B cell (primary cell): ENCODE measurements at regions of chr5 and their contacts with region 1.

Region 1: DNA sequence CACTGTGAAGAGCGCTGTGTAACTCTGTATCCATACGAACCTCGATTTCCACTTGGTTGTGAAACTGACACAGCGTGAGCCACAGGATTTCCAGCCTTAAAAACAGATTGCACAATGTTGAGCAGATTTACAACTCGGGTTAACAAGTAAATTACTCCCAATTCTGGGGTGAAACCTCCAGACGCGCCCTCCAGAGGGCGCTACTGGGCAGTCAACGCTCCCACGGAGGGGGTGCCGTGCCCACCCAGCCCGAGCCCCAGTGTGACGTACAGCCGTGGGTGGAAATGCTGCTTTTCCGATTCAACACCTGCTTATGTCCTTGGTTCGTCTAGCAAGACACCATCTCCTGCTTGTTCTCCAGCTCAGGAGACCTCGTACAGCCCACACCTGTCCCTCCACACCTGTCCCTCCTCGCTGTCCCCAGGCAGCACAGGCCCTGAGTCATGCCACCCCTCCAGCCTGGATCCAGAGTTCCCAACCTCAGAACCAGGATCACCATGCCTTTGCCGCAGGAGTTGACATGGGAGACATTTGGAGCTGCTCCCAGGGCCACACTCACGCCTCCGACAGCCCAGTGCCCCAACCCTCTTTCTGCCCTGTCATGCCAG is 34.4 kb upstream of the SLC6A3 start:
- DNase-seq: peak; percentile 89
- ATAC-seq: peak; percentile 64
- H3K4me3 ChIP-seq: no peak overlapping the region
- H3K4me3 Mint-ChIP-seq: peak overlapping the region; percentile 76
- H3K27ac ChIP-seq: peak overlapping the region; percentile 66 to 84
- H3K27ac Mint-ChIP-seq: peak overlapping the region; percentile 94
- H3K4me1 ChIP-seq: peaks cover 48 to 55% of the 10 kb centered on the region in 2 donors
- H3K4me1 Mint-ChIP-seq: peaks cover 52% of the 10 kb centered on the region
- H3K27me3 ChIP-seq: no peaks in the 10 kb centered on the region
- H3K27me3 Mint-ChIP-seq: no peaks in the 10 kb centered on the region
- CTCF ChIP-seq: peak; percentile 88

Region 2: GRCh38 chr5:1004461-1005248 is 475.0 kb before region 1 on chr5:
- CTCF ChIA-PET with region 1: no interaction called
- POLR2A ChIA-PET with region 1: no interaction called
- intact Hi-C with region 1: no loop called
- DNase-seq: peak; percentile 61
- ATAC-seq: peak; percentile 44
- H3K4me3 ChIP-seq: peak overlapping the region in 3 of 5 experiments; percentile 47 to 60 (median 51)
- H3K4me3 Mint-ChIP-seq: peak overlapping the region; percentile 74
- H3K27ac ChIP-seq: no peak overlapping the region
- H3K27ac Mint-ChIP-seq: no peak overlapping the region
- H3K4me1 ChIP-seq: peaks cover 20 to 25% of the 10 kb centered on the region in 2 donors
- H3K4me1 Mint-ChIP-seq: peaks cover 24% of the 10 kb centered on the region
- H3K27me3 ChIP-seq: peaks cover 0 to 54% (median 14%) of the 10 kb centered on the region in 4 experiments
- H3K27me3 Mint-ChIP-seq: peaks cover 39% of the 10 kb centered on the region
- CTCF ChIP-seq: peak; percentile 37

Region 3: GRCh38 chr5:1344975-1345838 is 134.5 kb before region 1 on chr5 and contains the start of gene CLPTM1L:
- CTCF ChIA-PET with region 1: no interaction called
- POLR2A ChIA-PET with region 1: interaction called, 3 read pairs
- intact Hi-C with region 1: loop called (anchors 10 kb)
- DNase-seq: peak; percentile 94
- ATAC-seq: peak; percentile 95
- H3K4me3 ChIP-seq: peak within 1 kb of the TSS; percentile 56 to 92 (median 81)
- H3K4me3 Mint-ChIP-seq: peak within 1 kb of the TSS; percentile 91
- H3K27ac ChIP-seq: peak within 1 kb of the TSS; percentile 73 to 78
- H3K27ac Mint-ChIP-seq: peak within 1 kb of the TSS; percentile 91
- H3K4me1 ChIP-seq: peaks cover 19 to 36% of the 10 kb centered on the region in 2 donors
- H3K4me1 Mint-ChIP-seq: peaks cover 29% of the 10 kb centered on the region
- H3K27me3 ChIP-seq: no peaks in the 10 kb centered on the region
- H3K27me3 Mint-ChIP-seq: no peaks in the 10 kb centered on the region
- CTCF ChIP-seq: no peak
- total RNA-seq, gene CLPTM1L: 99.9 and 104 TPM in 2 replicates

Region 4: GRCh38 chr5:1503241-1504068 is 23.8 kb after region 1 on chr5:
- CTCF ChIA-PET with region 1: interaction called, 81 read pairs
- POLR2A ChIA-PET with region 1: interaction called, 36 read pairs
- intact Hi-C with region 1: loop called (anchors 1 kb)
- DNase-seq: peak; percentile 81
- ATAC-seq: peak; percentile 34
- H3K4me3 ChIP-seq: peak overlapping the region in 4 of 5 experiments; percentile 5 to 54 (median 40)
- H3K4me3 Mint-ChIP-seq: peak overlapping the region; percentile 83
- H3K27ac ChIP-seq: peak overlapping the region; percentile 91 to 96
- H3K27ac Mint-ChIP-seq: peak overlapping the region; percentile 95
- H3K4me1 ChIP-seq: peaks cover 80 to 89% of the 10 kb centered on the region in 2 donors
- H3K4me1 Mint-ChIP-seq: peaks cover 83% of the 10 kb centered on the region
- H3K27me3 ChIP-seq: no peaks in the 10 kb centered on the region
- H3K27me3 Mint-ChIP-seq: no peaks in the 10 kb centered on the region
- CTCF ChIP-seq: no peak

Region 5: GRCh38 chr5:1523771-1524480 is 44.2 kb after region 1 on chr5 and contains the start of gene LPCAT1:
- CTCF ChIA-PET with region 1: interaction called, 4 read pairs
- POLR2A ChIA-PET with region 1: interaction called, 12 read pairs
- intact Hi-C with region 1: no loop called
- DNase-seq: peak; percentile 88
- ATAC-seq: peak; percentile 85
- H3K4me3 ChIP-seq: peak within 1 kb of the TSS; percentile 32 to 74 (median 64)
- H3K4me3 Mint-ChIP-seq: peak within 1 kb of the TSS; percentile 88
- H3K27ac ChIP-seq: peak within 1 kb of the TSS; percentile 76 to 90
- H3K27ac Mint-ChIP-seq: peak within 1 kb of the TSS; percentile 91
- H3K4me1 ChIP-seq: peaks cover 39 to 53% of the 10 kb centered on the region in 2 donors
- H3K4me1 Mint-ChIP-seq: peaks cover 53% of the 10 kb centered on the region
- H3K27me3 ChIP-seq: no peaks in the 10 kb centered on the region
- H3K27me3 Mint-ChIP-seq: no peaks in the 10 kb centered on the region
- CTCF ChIP-seq: no peak
- total RNA-seq, gene LPCAT1: 152 and 159 TPM in 2 replicates

Region 6: GRCh38 chr5:1594357-1595106 is 114.8 kb after region 1 on chr5:
- CTCF ChIA-PET with region 1: interaction called, 5 read pairs
- POLR2A ChIA-PET with region 1: interaction called, 3 read pairs
- intact Hi-C with region 1: loop called (anchors 1 kb)
- DNase-seq: peak; percentile 92
- ATAC-seq: peak; percentile 93
- H3K4me3 ChIP-seq: peak overlapping the region; percentile 11 to 90 (median 78)
- H3K4me3 Mint-ChIP-seq: peak overlapping the region; percentile 86
- H3K27ac ChIP-seq: peak overlapping the region; percentile 68 to 72
- H3K27ac Mint-ChIP-seq: peak overlapping the region; percentile 85
- H3K4me1 ChIP-seq: peaks cover 0 to 12% of the 10 kb centered on the region in 2 donors
- H3K4me1 Mint-ChIP-seq: peaks cover 22% of the 10 kb centered on the region
- H3K27me3 ChIP-seq: no peaks in the 10 kb centered on the region
- H3K27me3 Mint-ChIP-seq: no peaks in the 10 kb centered on the region
- CTCF ChIP-seq: peak; percentile 57

Region 7: GRCh38 chr5:1641560-1642166 is 162.0 kb after region 1 on chr5:
- CTCF ChIA-PET with region 1: interaction called, 33 read pairs
- POLR2A ChIA-PET with region 1: no interaction called
- intact Hi-C with region 1: loop called (anchors 1 kb)
- DNase-seq: peak; percentile 82
- ATAC-seq: peak; percentile 80
- H3K4me3 ChIP-seq: no peak overlapping the region
- H3K4me3 Mint-ChIP-seq: no peak overlapping the region
- H3K27ac ChIP-seq: no peak overlapping the region
- H3K27ac Mint-ChIP-seq: no peak overlapping the region
- H3K4me1 ChIP-seq: peaks cover 10 to 14% of the 10 kb centered on the region in 2 donors
- H3K4me1 Mint-ChIP-seq: peaks cover 12% of the 10 kb centered on the region
- H3K27me3 ChIP-seq: peaks cover 0 to 32% (median 18%) of the 10 kb centered on the region in 4 experiments
- H3K27me3 Mint-ChIP-seq: peaks cover 29% of the 10 kb centered on the region
- CTCF ChIP-seq: peak; percentile 99